ENCODE measurements at regions of chr16 and their contacts with region 1.

Region 1: DNA sequence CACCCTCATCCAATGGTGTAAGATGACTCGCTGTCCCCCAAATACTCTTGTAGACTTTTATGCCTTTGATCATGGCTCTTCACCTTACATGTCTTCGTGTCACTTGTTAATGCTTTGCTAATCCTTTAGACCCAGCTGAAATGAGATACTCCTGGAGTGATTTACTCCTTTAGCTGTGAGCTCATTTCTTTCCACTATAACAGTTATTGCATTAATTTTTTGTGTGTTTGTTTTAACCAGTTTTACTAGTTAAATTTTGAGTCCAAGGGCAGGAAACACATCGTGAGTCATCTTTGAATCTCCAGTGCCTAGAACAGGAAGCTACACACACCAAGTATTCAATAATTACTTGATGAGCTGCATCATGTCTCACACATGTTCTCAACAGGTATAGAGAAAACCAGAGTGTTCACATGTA is 6.5 kb upstream of the CTCF start:
- DNase-seq: no peak
- H3K4me3 ChIP-seq: no peak overlapping the region
- H3K27ac ChIP-seq: no peak overlapping the region
- H3K27me3 ChIP-seq: no peaks in the 10 kb centered on the region
- CTCF ChIP-seq: no peak

Region 2: GRCh38 chr16:67268136-67268579 is 287.6 kb before region 1 on chr16:
- CTCF ChIA-PET with region 1: no interaction called
- POLR2A ChIA-PET with region 1: no interaction called
- DNase-seq: peak; percentile 42
- H3K4me3 ChIP-seq: no peak overlapping the region
- H3K27ac ChIP-seq: no peak overlapping the region
- H3K27me3 ChIP-seq: no peaks in the 10 kb centered on the region
- CTCF ChIP-seq: no peak

Region 3: GRCh38 chr16:67641779-67642708 is 86.2 kb after region 1 on chr16:
- CTCF ChIA-PET with region 1: interaction called, 13 read pairs
- POLR2A ChIA-PET with region 1: no interaction called
- DNase-seq: no peak
- H3K4me3 ChIP-seq: no peak overlapping the region
- H3K27ac ChIP-seq: no peak overlapping the region
- H3K27me3 ChIP-seq: peaks cover 22% of the 10 kb centered on the region
- CTCF ChIP-seq: no peak

Measured in AG04450 (cell line).